Mammary epithelial cell (primary cell): ENCODE measurements at regions of chr13 and their contacts with region 1.

Region 1: DNA sequence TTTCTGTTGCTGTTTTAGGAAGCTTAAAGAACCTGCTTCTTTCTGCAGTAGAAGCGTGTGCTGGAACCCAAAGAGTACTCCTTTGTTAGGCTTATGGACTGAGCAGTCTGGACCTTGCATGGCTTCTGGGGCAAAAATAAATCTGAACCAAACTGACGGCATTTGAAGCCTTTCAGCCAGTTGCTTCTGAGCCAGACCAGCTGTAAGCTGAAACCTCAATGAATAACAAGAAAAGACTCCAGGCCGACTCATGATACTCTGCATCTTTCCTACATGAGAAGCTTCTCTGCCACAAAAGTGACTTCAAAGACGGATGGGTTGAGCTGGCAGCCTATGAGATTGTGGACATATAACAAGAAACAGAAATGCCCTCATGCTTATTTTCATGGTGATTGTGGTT is 103.1 kb downstream of the TNFRSF19 start:
- DNase-seq: peak; percentile 46
- H3K4me3 ChIP-seq: no peak overlapping the region
- H3K27ac ChIP-seq: no peak overlapping the region
- H3K4me1 ChIP-seq: peaks cover 10% of the 10 kb centered on the region
- H3K27me3 ChIP-seq: no peaks in the 10 kb centered on the region
- CTCF ChIP-seq: no peak

Region 2: DNA sequence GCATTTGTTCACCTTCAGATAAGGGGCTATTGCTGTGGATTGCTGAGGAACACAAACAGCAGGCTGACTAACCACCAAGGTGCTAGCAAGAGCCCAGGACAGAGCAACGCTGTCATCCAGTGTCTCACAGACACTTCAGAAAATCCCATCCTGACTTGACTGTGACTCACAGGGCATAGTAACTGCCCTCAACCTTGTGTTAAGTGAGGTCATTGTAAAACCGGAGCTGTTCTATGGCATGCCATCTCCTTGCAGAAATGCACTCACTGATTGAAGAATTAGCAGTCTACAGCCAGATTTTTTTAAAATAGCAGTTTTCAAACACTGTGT is 52.1 kb before region 1 on chr13:
- CTCF ChIA-PET with region 1: interaction called, 6 read pairs
- dilution Hi-C with region 1: no loop called
- in situ Hi-C with region 1: no loop called
- intact Hi-C with region 1: loop called (anchors 5 kb)
- DNase-seq: peak; percentile 97
- H3K4me3 ChIP-seq: no peak overlapping the region
- H3K27ac ChIP-seq: peak overlapping the region; percentile 28
- H3K4me1 ChIP-seq: peaks cover 18% of the 10 kb centered on the region
- H3K27me3 ChIP-seq: no peaks in the 10 kb centered on the region
- CTCF ChIP-seq: no peak

Region 3: DNA sequence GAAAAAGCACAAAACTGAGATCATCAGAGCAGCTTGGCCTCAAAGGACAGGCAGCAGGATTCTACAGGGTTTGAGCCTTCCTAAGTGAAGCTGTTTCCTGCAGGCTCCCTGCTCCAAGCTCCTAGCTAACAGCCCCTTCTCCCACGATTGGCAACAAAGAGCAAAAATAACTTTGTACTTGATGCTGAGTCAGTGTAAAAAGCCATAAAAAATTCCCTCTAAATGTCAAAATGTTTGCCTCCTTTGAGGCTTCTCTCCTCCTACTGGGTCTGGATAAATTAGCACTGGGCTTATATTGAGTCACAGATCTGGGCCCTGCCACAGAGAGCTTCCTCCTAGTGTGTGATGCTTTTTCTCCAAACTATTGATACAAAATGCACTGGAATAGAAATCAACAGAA is 50.1 kb after region 1 on chr13:
- CTCF ChIA-PET with region 1: no interaction called
- dilution Hi-C with region 1: loop called (anchors 5 kb)
- in situ Hi-C with region 1: no loop called
- intact Hi-C with region 1: no loop called
- DNase-seq: no peak
- H3K4me3 ChIP-seq: no peak overlapping the region
- H3K27ac ChIP-seq: no peak overlapping the region
- H3K4me1 ChIP-seq: no peaks in the 10 kb centered on the region
- H3K27me3 ChIP-seq: no peaks in the 10 kb centered on the region
- CTCF ChIP-seq: no peak

Region 4: DNA sequence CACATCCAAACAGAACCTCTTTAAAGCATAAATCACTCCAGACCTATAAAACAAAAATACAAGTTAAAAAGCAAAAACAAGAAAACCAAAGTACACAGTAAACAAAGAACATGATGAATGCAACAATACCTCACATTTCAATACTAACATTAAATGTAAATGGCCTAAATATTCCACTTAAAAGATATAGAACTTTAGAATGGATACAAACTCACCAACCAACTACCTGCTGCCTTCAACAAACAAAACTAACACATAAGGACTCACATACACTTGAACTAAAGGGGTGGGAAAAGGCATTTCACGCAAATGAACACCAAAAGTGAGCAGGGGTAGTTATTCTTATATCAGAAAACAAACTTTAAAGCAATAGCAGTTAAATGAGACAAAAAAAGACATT is 1377.7 kb after region 1 on chr13:
- CTCF ChIA-PET with region 1: no interaction called
- dilution Hi-C with region 1: no loop called
- in situ Hi-C with region 1: no loop called
- intact Hi-C with region 1: no loop called
- DNase-seq: no peak
- H3K4me3 ChIP-seq: no peak overlapping the region
- H3K27ac ChIP-seq: no peak overlapping the region
- H3K4me1 ChIP-seq: peaks cover 4% of the 10 kb centered on the region
- H3K27me3 ChIP-seq: peaks cover 13% of the 10 kb centered on the region
- CTCF ChIP-seq: no peak